ENCODE measurements at regions of chr13 and their contacts with region 1.

Region 1: GRCh38 chr13:102517959-102518358 is 78.8 kb upstream of the TPP2 start:
- DNase-seq: no peak
- H3K4me3 ChIP-seq: no peak overlapping the region
- H3K27ac ChIP-seq: no peak overlapping the region
- H3K4me1 ChIP-seq: no peaks in the 10 kb centered on the region
- H3K27me3 ChIP-seq: no peaks in the 10 kb centered on the region
- CTCF ChIP-seq: no peak
- POLR2A ChIP-seq: no peak

Region 2: DNA sequence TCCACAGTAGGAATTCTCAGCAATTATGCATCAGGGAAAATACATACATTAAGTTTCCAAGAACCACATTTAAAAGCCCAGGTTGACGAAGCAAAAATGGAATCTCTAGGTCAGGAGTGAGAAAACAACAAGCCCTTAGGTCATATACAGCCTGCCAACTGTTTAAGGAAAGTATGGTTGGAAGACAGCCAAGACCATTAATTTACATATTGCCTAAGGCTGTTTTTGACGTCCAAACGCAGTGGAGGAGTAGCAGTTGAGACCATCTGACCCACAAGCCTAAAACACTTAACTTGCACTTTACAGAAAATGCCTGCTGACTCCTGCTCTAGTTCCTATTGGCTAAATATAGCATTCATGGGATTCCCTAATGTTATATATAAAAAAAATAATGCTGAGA is 766.5 kb before region 1 on chr13:
- intact Hi-C with region 1: no loop called
- DNase-seq: no peak
- H3K4me3 ChIP-seq: no peak overlapping the region
- H3K27ac ChIP-seq: no peak overlapping the region
- H3K4me1 ChIP-seq: no peaks in the 10 kb centered on the region
- H3K27me3 ChIP-seq: no peaks in the 10 kb centered on the region
- CTCF ChIP-seq: no peak
- POLR2A ChIP-seq: no peak

Region 3: GRCh38 chr13:101930331-101930730 is 587.6 kb before region 1 on chr13:
- intact Hi-C with region 1: loop called (anchors 10 kb)
- DNase-seq: no peak
- H3K4me3 ChIP-seq: no peak overlapping the region
- H3K27ac ChIP-seq: no peak overlapping the region
- H3K4me1 ChIP-seq: no peaks in the 10 kb centered on the region
- H3K27me3 ChIP-seq: no peaks in the 10 kb centered on the region
- CTCF ChIP-seq: no peak
- POLR2A ChIP-seq: no peak

Measured in breast epithelium (tissue), 4 donors.